Activated naive CD4-positive, alpha-beta T cell treated with anti-CD3 and anti-CD28 coated beads for 36 hours (primary cell): ENCODE measurements at regions of chr12 and their contacts with region 1.

Region 1: GRCh38 chr12:75480469-75480949 is at the start of gene GLIPR1:
- DNase-seq: peak; percentile 77
- H3K4me3 Mint-ChIP-seq: peak within 1 kb of the TSS; percentile 87
- H3K27ac Mint-ChIP-seq: peak within 1 kb of the TSS; percentile 82
- H3K4me1 Mint-ChIP-seq: peaks cover 78% of the 10 kb centered on the region
- H3K27me3 Mint-ChIP-seq: no peaks in the 10 kb centered on the region
- total RNA-seq, gene GLIPR1: 1.3 to 1.5 TPM

Region 2: GRCh38 chr12:74889563-74890236 is 590.8 kb before region 1 on chr12:
- CTCF ChIA-PET with region 1: no interaction called
- intact Hi-C with region 1: loop called (anchors 1 kb)
- DNase-seq: no peak
- H3K4me3 Mint-ChIP-seq: no peak overlapping the region
- H3K27ac Mint-ChIP-seq: no peak overlapping the region
- H3K4me1 Mint-ChIP-seq: peaks cover 17% of the 10 kb centered on the region
- H3K27me3 Mint-ChIP-seq: no peaks in the 10 kb centered on the region

Region 3: GRCh38 chr12:75390899-75391538 is 89.5 kb before region 1 on chr12 and contains the start of gene GLIPR1L2:
- CTCF ChIA-PET with region 1: interaction called, 10 read pairs
- intact Hi-C with region 1: loop called (anchors 1 kb)
- DNase-seq: peak; percentile 93
- H3K4me3 Mint-ChIP-seq: peak within 1 kb of the TSS; percentile 87
- H3K27ac Mint-ChIP-seq: peak within 1 kb of the TSS; percentile 89
- H3K4me1 Mint-ChIP-seq: peaks cover 27% of the 10 kb centered on the region
- H3K27me3 Mint-ChIP-seq: no peaks in the 10 kb centered on the region
- total RNA-seq, gene GLIPR1L2: 0.33 to 0.35 TPM

Region 4: DNA sequence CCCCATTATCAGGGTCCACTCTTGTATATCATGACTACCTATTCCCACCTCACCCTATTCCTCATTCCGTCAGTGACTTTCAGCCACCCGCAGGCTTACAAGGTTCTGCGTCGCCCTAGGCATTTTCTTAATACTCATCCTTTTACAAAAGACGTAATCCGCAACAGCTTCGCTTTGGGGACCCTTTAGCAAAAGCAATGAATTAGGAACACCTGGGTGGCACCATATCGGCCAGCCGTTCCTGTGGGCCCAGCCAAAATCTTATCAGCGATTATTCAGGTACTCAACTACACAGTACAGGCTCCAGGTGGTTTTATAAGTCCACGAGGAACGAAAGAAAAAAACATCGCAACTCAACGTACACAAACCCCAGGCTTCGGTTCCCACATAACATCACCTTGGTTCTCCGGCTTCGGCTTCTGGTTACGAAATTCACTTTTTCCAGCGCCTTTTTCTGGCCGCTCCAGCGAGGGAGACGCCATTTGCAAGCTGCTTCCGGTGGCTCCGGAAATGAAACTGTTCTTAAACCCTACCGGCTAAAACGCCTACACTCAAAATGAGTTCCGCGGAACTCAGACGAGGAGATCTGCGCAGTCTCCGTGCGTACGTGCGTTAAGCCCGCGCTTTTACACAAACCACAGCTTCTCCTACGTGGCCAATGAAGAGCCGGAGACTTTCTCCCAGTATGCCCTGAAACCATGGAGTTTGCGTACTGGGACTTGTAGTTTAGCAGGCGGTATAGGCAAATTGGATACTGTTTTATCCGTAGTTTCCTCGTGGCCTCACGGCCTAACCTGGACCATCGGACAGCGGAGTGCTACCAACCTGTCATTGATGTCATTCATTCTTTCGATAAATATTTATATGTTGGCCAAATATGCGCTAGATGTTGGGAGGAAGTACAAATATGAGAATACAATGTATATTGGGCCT is 30.9 kb after region 1 on chr12 and contains the start of gene KRR1:
- CTCF ChIA-PET with region 1: interaction called, 25 read pairs
- intact Hi-C with region 1: loop called (anchors 1 kb)
- DNase-seq: peak; percentile 95
- H3K4me3 Mint-ChIP-seq: peak within 1 kb of the TSS; percentile 95
- H3K27ac Mint-ChIP-seq: peak within 1 kb of the TSS; percentile 98
- H3K4me1 Mint-ChIP-seq: peaks cover 29% of the 10 kb centered on the region
- H3K27me3 Mint-ChIP-seq: no peaks in the 10 kb centered on the region
- total RNA-seq, gene KRR1: 81.1 to 83.9 TPM

Region 5: GRCh38 chr12:75944097-75944904 is 463.8 kb after region 1 on chr12:
- CTCF ChIA-PET with region 1: no interaction called
- intact Hi-C with region 1: loop called (anchors 1 kb)
- DNase-seq: peak; percentile 44
- H3K4me3 Mint-ChIP-seq: no peak overlapping the region
- H3K27ac Mint-ChIP-seq: peak overlapping the region; percentile 87
- H3K4me1 Mint-ChIP-seq: peaks cover 22% of the 10 kb centered on the region
- H3K27me3 Mint-ChIP-seq: no peaks in the 10 kb centered on the region

Region 6: DNA sequence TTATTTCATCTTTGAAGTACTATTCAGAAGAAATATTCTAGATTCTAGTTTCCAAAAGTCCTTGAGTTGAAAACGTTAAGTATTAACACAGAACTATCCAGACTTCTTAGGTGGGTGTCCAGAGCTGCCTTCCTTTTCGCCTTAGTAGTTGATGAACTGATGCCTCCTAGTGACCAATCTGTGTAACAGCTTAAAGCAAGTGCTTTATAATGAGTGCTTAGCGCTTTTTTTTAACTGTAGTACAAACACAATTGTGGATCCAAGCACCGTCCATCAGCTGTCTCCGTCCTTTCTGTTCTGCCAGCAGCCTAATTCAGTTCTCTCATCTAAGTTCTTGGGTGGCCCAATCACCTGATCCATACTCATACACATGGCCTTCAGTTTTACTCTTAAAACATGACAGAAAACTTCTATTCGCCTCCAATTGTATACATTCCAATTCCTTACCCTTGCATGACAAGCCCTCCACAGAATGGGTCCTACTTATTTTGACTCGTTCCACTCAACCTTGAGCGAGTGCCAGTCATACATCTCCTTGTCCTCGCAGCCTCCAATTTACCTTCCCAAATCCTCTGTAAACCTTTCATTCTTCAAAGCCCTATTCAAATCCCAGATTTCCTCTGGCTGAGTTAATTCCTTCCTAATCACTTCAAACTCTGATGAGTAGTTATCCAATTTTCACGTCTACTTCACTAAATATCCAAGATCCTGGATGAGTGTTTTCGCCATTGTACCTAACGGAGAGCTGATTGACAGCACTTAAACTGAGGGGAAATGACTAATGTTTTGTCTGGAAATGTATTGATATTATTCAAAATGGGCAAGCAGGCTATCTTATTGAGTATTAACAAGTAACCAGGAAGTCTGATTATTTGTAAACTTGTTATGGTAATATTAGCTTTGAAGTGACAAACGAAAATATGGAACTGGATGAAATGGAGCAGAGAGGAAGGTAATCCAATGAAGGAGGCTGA is 556.9 kb after region 1 on chr12:
- CTCF ChIA-PET with region 1: interaction called, 4 read pairs
- intact Hi-C with region 1: loop called (anchors 1 kb)
- DNase-seq: peak; percentile 30
- H3K4me3 Mint-ChIP-seq: no peak overlapping the region
- H3K27ac Mint-ChIP-seq: no peak overlapping the region
- H3K4me1 Mint-ChIP-seq: peaks cover 18% of the 10 kb centered on the region
- H3K27me3 Mint-ChIP-seq: no peaks in the 10 kb centered on the region

Region 7: GRCh38 chr12:76310110-76310509 is 829.6 kb after region 1 on chr12:
- CTCF ChIA-PET with region 1: no interaction called
- intact Hi-C with region 1: no loop called
- DNase-seq: no peak
- H3K4me3 Mint-ChIP-seq: no peak overlapping the region
- H3K27ac Mint-ChIP-seq: no peak overlapping the region
- H3K4me1 Mint-ChIP-seq: no peaks in the 10 kb centered on the region
- H3K27me3 Mint-ChIP-seq: peaks cover 13% of the 10 kb centered on the region

Region 8: DNA sequence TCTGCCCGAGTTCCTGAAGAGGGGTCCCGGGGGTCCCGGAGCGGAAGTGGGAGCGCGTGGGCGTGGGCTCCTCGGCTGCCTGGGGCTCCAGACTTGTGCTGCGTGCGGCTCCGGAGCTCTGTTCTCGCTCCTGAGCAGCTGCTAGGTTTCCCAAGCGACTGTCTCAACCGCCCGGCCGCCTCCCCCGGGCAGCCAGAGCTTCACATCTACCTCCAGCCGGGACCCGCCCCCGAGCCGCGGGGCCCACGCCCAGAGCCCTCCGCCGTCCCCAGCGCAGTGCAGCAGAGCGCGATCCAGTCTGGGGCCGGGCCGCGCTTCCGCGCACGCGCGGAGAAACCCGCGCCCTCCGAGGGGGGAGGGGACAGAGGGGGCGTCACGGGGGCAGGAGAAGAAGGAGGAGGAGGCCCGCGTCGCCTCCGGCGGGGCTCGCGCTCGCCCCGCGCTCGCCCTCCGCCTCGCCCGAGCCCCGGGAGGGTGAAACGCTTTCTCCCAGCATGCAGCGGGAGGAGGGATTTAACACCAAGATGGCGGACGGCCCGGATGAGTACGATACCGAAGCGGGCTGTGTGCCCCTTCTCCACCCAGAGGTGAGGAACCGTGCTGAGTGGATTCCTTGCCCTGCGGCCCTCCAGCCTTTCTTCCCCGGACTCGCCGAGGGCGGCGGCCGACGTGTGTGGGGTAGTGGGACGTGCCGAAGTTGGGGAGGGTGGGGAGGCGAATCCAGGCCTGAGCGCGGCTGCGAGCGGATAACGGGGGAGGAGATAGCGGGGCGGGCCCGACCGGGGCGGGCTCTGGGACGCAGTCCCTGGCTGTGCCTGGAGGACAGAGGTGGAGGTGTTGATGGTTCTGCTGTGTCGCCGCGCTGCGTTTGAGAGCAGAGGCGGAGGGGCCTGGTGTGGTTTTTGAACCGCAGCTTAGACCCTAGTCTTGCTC is 1283.5 kb after region 1 on chr12 and contains the start of gene ZDHHC17:
- CTCF ChIA-PET with region 1: no interaction called
- intact Hi-C with region 1: loop called (anchors 10 kb)
- DNase-seq: peak; percentile 88
- H3K4me3 Mint-ChIP-seq: peak within 1 kb of the TSS; percentile 98
- H3K27ac Mint-ChIP-seq: peak within 1 kb of the TSS; percentile 91
- H3K4me1 Mint-ChIP-seq: peaks cover 38% of the 10 kb centered on the region
- H3K27me3 Mint-ChIP-seq: no peaks in the 10 kb centered on the region
- total RNA-seq, gene ZDHHC17: 19.1 to 22.2 TPM